Transverse colon (tissue), 4 donors: ENCODE measurements at regions of chr3 and their contacts with region 1.

Region 1: GRCh38 chr3:194893121-194893987 is 207.7 kb downstream of the FAM43A start:
- DNase-seq: no peak
- H3K4me3 ChIP-seq: no peak overlapping the region
- H3K27ac ChIP-seq: no peak overlapping the region
- H3K4me1 ChIP-seq: no peaks in the 10 kb centered on the region
- H3K27me3 ChIP-seq: no peaks in the 10 kb centered on the region
- CTCF ChIP-seq: no peak
- EP300 ChIP-seq: no peak
- POLR2A ChIP-seq: no peak

Region 2: DNA sequence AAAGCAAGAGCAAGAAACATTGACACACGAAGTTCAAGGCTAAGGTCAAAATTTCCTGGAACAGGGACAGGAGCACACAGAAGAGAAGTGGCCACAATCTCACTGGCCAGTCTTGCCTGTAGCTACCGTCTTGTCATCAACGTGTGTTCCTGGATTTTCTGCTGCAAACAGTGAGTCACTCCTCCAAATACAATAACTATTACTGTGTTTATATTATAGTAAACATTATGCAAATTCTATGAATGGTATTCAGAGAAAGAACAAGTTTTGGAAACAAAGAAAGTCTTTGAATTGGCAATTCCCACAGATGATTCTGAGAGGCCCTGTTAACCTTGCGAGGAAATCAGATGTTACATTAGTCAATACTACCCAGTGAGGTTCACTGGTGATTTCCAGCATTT is 12.9 kb after region 1 on chr3:
- in situ Hi-C with region 1: no loop called
- intact Hi-C with region 1: loop called (anchors 1 kb)
- DNase-seq: no peak
- H3K4me3 ChIP-seq: no peak overlapping the region
- H3K27ac ChIP-seq: no peak overlapping the region
- H3K4me1 ChIP-seq: no peaks in the 10 kb centered on the region
- H3K27me3 ChIP-seq: no peaks in the 10 kb centered on the region
- CTCF ChIP-seq: no peak
- EP300 ChIP-seq: no peak
- POLR2A ChIP-seq: no peak